Naive thymus-derived CD8-positive, alpha-beta T cell (primary cell): ENCODE measurements at regions of chr1 and their contacts with region 1.

Region 1: DNA sequence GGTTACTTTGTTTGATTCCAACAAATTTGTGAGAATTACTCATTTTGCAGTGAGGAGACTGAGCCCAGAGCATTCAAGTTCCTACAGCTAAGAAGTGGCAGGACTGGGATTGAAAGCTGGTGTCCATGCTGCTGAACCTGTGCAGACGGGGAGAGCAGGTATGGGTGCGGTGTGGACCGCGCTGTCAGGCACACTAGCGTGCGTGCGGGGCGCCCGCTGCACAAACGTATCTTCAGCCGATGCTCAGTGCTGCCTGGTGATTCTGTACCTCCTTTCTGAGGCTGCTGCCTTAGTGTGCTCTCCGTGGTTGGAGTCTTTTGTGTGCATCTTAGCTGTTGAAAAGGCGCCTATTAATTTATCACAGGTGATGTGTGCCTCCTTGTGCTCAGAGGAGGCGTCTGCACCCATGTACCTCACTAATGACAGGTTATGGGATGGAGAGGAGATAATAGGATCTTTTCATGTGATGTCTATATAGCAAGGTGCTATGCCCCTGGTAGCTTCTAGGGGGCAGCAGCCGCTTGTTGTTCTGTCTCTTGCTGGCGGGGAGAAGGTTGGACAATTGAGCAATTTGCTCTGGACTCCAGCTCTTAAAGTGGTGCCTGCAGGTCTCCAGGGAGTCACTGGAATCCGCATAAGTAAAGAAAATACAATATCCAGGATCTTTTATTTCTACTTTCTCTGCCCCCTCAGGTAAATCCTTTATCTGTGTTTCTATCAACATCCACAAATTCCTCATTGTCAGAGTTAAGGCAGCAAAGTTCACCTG is 32.5 kb downstream of the PEX14 start:
- DNase-seq: peak; percentile 22 to 70 (median 42)
- ATAC-seq: peak; percentile 43 to 66
- H3K4me3 Mint-ChIP-seq: peak overlapping the region in 2 of 10 donors; percentile 3 to 16
- H3K27ac Mint-ChIP-seq: peak overlapping the region in 9 of 10 donors; percentile 7 to 81 (median 70)
- H3K4me1 Mint-ChIP-seq: peaks cover 14 to 56% (median 47%) of the 10 kb centered on the region in 4 donors
- H3K27me3 Mint-ChIP-seq: no peaks in the 10 kb centered on the region

Region 2: GRCh38 chr1:10494754-10495474 is 12.4 kb before region 1 on chr1:
- POLR2A ChIA-PET with region 1: interaction called, 16 read pairs
- DNase-seq: peak; percentile 61 to 85 (median 74)
- ATAC-seq: peak; percentile 71 to 82
- H3K4me3 Mint-ChIP-seq: peak overlapping the region; percentile 76 to 93 (median 89)
- H3K27ac Mint-ChIP-seq: peak overlapping the region; percentile 91 to 99 (median 96)
- H3K4me1 Mint-ChIP-seq: peaks cover 31 to 56% (median 50%) of the 10 kb centered on the region in 4 donors
- H3K27me3 Mint-ChIP-seq: no peaks in the 10 kb centered on the region

Region 3: DNA sequence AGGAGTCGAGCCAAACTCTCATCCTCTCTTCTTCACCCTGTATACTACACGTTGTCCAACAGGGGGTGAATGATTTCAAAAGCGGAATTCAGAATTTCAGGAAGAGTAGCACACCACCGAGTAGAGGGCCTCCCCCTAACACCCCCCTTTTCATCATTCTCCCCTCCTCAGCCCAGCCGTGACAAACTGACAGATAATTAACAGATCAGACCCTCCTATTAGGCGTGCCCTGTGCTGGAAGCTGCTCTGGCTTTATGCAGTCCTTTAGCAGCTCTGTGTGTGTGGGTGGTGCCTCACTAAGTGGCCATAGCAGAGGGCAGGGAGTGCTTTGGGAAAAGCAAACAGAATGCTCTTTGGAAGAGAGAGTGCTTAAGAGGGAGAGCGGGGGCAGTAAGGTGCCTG is 11.7 kb after region 1 on chr1:
- POLR2A ChIA-PET with region 1: no interaction called
- DNase-seq: no peak
- ATAC-seq: no peak
- H3K4me3 Mint-ChIP-seq: no peak overlapping the region
- H3K27ac Mint-ChIP-seq: peak overlapping the region in 1 of 10 donors; percentile 28
- H3K4me1 Mint-ChIP-seq: peaks cover 25 to 73% (median 59%) of the 10 kb centered on the region in 4 donors
- H3K27me3 Mint-ChIP-seq: no peaks in the 10 kb centered on the region